ENCODE measurements at regions of chr22 and their contacts with region 1.

Region 1: DNA sequence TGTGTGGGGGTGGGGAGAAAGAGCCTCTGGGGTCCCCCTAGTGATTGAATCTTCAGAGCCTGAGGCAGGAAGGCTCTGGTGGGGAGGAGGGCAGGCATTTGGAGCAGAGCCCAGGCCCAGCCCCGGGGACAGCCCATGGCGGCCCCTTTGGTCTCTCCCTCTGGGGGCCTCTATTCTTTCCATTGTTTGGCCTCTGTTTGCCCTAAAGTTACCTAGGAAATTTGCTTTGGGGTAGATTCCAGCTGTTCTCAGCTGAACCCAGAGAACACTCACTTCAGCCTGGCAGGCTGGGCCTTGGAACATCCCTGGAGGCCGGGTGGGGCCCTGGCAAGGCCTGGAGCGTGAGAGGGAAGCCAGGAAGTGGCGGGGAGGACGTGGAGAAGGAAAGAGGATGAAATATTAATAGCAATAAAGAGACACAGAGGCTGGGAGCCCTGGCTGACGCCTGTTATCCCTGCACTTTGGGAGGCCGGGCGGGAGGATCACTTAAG is 22.9 kb upstream of the A4GALT start:
- DNase-seq: no peak
- H3K4me3 ChIP-seq: no peak overlapping the region
- H3K27ac ChIP-seq: no peak overlapping the region
- H3K4me1 ChIP-seq: peaks cover 18% of the 10 kb centered on the region
- H3K27me3 ChIP-seq: no peaks in the 10 kb centered on the region
- CTCF ChIP-seq: no peak

Region 2: GRCh38 chr22:42635531-42635930 is 108.0 kb before region 1 on chr22:
- CTCF ChIA-PET with region 1: no interaction called
- dilution Hi-C with region 1: loop called (anchors 5 kb)
- in situ Hi-C with region 1: no loop called
- intact Hi-C with region 1: no loop called
- DNase-seq: peak; percentile 89
- H3K4me3 ChIP-seq: no peak overlapping the region
- H3K27ac ChIP-seq: peak overlapping the region; percentile 76
- H3K4me1 ChIP-seq: peaks cover 24% of the 10 kb centered on the region
- H3K27me3 ChIP-seq: no peaks in the 10 kb centered on the region
- CTCF ChIP-seq: no peak

Region 3: DNA sequence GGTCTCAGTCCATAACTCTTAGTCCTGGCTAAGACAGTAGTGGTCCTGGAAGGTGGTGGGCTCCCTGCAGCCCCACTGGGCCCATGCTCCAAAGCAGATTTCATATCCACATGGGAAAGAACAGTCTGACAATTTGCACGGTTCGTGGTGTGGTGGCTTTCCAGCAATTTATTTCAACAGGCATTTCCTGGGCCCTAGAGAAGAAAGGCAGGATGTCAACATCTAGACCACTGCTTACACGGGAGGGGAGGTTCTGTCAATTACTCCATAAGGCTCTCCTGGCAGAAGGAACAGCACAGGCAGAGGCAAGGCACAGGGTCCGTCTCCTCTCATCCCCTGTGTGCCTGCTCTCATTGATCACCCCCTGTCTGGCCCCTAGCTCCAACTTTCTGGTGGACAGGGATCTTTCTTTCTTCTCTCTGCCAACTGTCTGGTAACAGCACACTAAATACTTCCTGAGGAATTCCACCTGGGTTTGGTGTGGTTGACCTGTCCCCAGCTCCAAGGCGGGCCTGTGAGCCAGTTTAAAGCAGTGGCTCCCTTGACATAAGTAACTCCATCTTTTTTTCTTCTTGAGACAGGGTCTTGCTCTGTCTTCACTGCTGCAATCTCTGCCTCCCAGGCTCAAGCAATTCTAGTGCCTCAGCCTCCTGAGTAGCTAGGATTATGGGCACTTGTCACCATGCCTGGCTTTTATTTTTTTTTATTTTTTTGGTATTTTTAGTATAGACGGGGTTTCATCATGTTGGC is 17.8 kb before region 1 on chr22:
- CTCF ChIA-PET with region 1: no interaction called
- dilution Hi-C with region 1: no loop called
- in situ Hi-C with region 1: no loop called
- intact Hi-C with region 1: loop called (anchors 2 kb)
- DNase-seq: no peak
- H3K4me3 ChIP-seq: no peak overlapping the region
- H3K27ac ChIP-seq: no peak overlapping the region
- H3K4me1 ChIP-seq: peaks cover 5% of the 10 kb centered on the region
- H3K27me3 ChIP-seq: peaks cover 10% of the 10 kb centered on the region
- CTCF ChIP-seq: no peak

Region 4: DNA sequence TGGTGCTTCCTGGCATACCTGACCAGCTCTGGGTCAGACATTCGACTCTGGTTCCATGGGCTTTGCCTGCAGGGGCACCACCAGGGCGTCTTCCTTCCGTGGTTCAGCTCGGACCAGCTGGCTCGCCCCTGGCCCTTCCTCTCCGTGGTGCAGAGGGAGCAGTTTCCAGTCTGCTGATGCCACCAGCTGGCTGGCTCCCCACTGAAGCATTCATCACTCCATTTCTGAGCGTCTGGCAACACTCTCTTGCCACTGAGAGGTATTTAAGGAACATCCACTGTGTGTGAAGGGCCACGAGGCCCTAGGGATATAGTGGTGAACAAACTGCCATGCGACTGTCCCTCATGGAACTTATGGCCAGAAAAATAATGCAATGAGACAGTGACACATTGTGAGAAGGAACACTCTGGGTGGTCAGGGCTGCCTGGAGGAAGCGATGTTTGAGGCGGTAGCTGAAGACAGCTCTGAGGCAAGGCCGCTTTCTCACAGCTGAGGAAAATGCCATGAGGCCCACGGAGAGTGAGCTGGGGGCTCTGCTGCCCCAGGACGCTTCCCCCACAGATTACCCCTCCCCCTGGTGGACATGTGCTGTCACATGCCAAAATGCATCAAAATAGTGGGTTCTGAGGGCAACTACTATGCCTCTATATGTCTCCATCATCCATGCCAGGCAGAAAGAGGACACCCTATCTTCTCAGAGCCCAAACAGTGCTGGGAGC is 158.4 kb after region 1 on chr22:
- CTCF ChIA-PET with region 1: no interaction called
- dilution Hi-C with region 1: no loop called
- in situ Hi-C with region 1: no loop called
- intact Hi-C with region 1: no loop called
- DNase-seq: no peak
- H3K4me3 ChIP-seq: no peak overlapping the region
- H3K27ac ChIP-seq: no peak overlapping the region
- H3K4me1 ChIP-seq: peaks cover 13% of the 10 kb centered on the region
- H3K27me3 ChIP-seq: no peaks in the 10 kb centered on the region
- CTCF ChIP-seq: peak; percentile 22 to 29